Activated B cell treated with CpG ODN at 0.5 μM for 24 hours (primary cell): ENCODE measurements at regions of chr16 and their contacts with region 1.

Region 1: DNA sequence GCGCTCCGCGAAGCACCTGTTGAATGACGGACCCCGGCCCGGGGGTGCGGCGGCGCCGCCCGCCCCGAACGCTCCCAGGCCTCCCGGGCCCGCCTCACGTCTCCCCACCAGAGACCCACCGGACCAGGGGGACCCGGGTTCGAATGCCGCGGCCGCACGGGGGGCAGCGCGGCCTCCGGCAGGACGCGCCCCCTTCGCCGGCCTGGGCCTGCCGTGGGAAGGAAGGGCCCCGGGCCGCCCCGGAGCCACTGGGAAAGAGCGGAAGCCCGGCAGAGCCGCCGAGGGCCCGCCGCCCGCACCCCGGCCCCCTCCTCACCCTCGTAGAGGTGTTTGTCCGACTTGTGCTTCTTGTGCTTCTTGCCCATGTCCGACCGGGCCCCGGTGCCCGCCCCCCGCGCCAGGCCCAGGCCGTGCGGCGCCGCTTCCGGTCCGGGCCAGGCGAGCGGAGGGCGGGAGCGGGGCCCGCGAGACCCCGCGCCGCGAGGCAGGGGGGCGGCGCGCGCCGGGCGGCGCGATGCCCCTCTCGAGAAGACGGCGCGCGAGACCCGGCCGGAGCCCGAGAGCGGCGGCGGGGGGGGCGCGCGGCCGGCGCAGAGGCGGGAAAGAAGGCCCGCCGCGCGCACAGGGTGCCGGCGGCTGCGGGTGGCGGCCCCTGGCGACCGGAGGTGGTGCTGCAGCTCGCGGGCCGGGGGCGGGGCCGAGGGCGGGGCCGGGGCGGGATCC is at the start of gene BRD7:
- DNase-seq: peak; percentile 79
- ATAC-seq: peak; percentile 89
- H3K4me3 Mint-ChIP-seq: peak within 1 kb of the TSS; percentile 92
- H3K27ac Mint-ChIP-seq: peak within 1 kb of the TSS; percentile 90
- H3K4me1 Mint-ChIP-seq: peaks cover 47% of the 10 kb centered on the region
- H3K27me3 Mint-ChIP-seq: peaks cover 4% of the 10 kb centered on the region
- CTCF ChIP-seq: no peak
- total RNA-seq, gene BRD7: 60.3 and 65.2 TPM in 2 replicates

Region 2: DNA sequence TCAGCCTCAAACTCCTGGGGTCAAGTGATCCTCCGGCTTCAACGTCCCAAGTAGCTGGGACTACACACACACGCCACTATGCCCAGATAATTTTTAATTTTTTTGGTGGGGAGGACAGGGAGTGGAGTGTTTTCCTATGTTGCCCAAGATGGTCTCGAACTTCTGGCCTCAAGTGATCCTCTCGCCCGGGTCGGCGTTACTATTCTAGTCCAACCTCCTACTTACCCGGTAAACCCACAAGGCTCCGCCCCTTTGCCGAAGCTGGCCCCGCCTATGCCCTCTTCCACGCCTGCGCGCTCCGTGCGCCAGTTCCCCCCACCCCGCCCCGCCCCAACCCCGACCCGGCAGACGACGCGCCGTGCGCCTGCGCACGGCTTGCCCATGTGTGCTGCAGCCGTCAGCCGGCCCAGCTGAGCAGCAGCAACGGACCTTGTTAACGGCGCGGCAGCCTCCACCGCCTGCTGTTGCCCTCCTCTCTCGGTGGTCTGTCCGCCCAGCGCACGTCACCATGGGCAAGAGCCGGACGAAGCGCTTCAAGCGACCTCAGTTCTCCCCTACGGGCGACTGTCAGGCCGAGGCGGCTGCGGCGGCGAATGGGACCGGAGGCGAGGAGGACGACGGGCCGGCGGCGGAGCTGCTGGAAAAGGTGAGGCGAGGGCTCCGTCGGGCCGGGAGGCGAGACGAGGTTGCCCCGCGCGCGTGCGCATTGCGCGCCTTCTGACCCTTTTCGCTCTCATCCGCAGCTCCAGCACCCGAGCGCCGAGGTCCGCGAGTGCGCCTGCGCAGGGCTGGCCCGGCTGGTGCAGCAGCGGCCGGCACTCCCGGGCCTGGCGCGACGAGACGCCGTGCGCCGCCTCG is 302.7 kb before region 1 on chr16 and contains the start of gene HEATR3:
- CTCF ChIA-PET with region 1: no interaction called
- POLR2A ChIA-PET with region 1: no interaction called
- intact Hi-C with region 1: loop called (anchors 1 kb)
- DNase-seq: peak; percentile 92
- ATAC-seq: peak; percentile 85
- H3K4me3 Mint-ChIP-seq: peak within 1 kb of the TSS; percentile 90
- H3K27ac Mint-ChIP-seq: peak within 1 kb of the TSS; percentile 90
- H3K4me1 Mint-ChIP-seq: peaks cover 31% of the 10 kb centered on the region
- H3K27me3 Mint-ChIP-seq: no peaks in the 10 kb centered on the region
- CTCF ChIP-seq: no peak
- total RNA-seq, gene HEATR3: 16.1 and 17.8 TPM in 2 replicates

Region 3: GRCh38 chr16:50308237-50308965 is 60.2 kb before region 1 on chr16:
- CTCF ChIA-PET with region 1: no interaction called
- POLR2A ChIA-PET with region 1: interaction called, 10 read pairs
- intact Hi-C with region 1: no loop called
- DNase-seq: peak; percentile 11
- ATAC-seq: no peak
- H3K4me3 Mint-ChIP-seq: no peak overlapping the region
- H3K27ac Mint-ChIP-seq: no peak overlapping the region
- H3K4me1 Mint-ChIP-seq: peaks cover 4% of the 10 kb centered on the region
- H3K27me3 Mint-ChIP-seq: no peaks in the 10 kb centered on the region
- CTCF ChIP-seq: no peak

Region 4: DNA sequence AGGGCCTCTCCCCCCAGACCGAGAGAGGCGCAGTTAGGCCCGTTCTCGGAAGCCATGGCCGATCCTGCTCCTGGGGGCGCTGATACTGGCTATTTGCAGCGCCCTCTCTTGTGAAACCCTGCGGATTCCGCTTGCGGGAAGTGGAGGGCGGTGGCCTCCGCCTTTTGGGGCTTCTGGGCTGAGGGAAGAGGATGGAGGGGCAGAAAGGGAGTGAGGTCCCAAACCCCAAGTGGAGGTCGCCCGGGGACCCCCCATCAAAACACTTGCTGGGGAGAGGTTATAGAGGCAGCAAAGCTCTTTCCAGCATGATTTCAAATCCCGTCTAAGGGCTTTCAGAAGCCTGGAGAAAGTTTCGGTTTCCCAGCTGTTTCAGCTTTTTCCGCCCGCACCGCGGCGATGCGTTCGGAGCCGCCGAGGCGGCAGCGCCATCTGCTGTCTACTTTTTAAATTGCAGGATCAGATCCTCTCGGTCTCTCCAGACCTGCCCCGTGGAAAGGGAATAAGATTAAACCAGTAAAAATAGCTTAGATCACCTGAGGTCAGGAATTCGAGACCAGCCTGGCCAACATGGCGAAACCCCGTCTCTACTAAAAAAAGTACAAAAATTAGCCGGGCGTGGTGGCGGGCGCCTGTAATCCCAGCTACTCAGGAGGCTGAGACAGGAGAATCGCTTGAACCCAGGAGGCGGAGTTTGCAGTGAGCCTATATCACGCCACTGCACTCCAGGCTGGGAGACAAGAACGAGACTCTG is 296.7 kb after region 1 on chr16:
- CTCF ChIA-PET with region 1: interaction called, 5 read pairs
- POLR2A ChIA-PET with region 1: no interaction called
- intact Hi-C with region 1: loop called (anchors 5 kb)
- DNase-seq: peak; percentile 68
- ATAC-seq: peak; percentile 70
- H3K4me3 Mint-ChIP-seq: peak overlapping the region; percentile 81
- H3K27ac Mint-ChIP-seq: peak overlapping the region; percentile 65
- H3K4me1 Mint-ChIP-seq: peaks cover 23% of the 10 kb centered on the region
- H3K27me3 Mint-ChIP-seq: no peaks in the 10 kb centered on the region
- CTCF ChIP-seq: no peak